Right ventricle myocardium superior (tissue), 1 donor: ENCODE measurements at regions of chr1 and their contacts with region 1.

Region 1: GRCh38 chr1:175221666-175222175 is 29.1 kb upstream of the KIAA0040 start:
- DNase-seq: peak; percentile 49
- ATAC-seq: peak; percentile 71

Region 2: GRCh38 chr1:175154629-175155472 is 66.9 kb before region 1 on chr1:
- intact Hi-C with region 1: loop called (anchors 5 kb)
- DNase-seq: peak; percentile 83
- ATAC-seq: peak; percentile 72